ENCODE measurements at regions of chr13 and their contacts with region 1.

Region 1: DNA sequence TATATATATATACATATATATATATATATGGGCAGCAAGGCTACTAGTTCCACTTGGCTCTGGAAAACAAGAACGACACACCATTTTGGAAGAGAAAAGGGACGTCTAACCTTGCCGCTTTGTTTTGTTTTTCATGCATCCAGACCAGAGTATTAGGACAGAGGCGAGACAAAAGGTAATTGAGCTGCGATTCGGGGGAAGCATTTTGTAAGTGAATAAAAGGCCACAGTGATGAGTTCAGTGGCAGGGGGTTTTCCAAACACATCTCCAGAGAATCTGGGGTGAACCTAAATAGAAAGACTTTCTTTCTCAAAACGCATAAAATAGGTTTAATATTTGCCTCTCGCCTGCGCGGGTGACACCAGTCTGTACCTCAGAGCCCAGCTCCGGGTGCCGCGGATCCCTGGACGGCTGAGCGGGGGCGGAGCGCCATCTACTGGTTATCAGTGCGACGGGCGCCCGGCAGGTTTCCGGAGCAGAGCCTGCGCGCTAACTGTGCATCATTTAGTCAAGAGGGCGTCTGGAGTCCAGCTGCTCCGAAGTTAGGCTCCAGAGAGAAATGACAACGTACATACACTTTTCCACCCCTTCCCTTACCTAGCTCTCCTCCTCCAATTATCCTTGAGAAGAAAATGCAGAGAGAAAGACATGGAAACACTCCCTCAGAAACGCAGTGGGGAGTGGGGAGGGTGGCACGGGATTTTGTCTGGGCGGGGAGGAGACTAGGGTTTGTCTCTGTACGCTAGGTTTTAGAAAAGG is 262.3 kb downstream of the TBC1D4 start:
- ATAC-seq: peak; percentile 95 to 100 (median 98)
- H3K4me3 ChIP-seq: peak overlapping the region; percentile 20 to 29 (median 23)
- H3K27ac ChIP-seq: no peak overlapping the region
- H3K4me1 ChIP-seq: peaks cover 15 to 25% of the 10 kb centered on the region in 2 donors

Region 2: GRCh38 chr13:74825152-74825937 is 394.3 kb before region 1 on chr13:
- in situ Hi-C with region 1: loop called in 1 of 9 experiments (anchors 25 kb)
- ATAC-seq: peak in 6 of 8 experiments; percentile 56 to 98 (median 79)
- H3K4me3 ChIP-seq: no peak overlapping the region
- H3K27ac ChIP-seq: no peak overlapping the region
- H3K4me1 ChIP-seq: peaks cover 0 to 6% of the 10 kb centered on the region in 2 donors

Measured in motor neuron (in vitro differentiated cells).